A549 (cell line): ENCODE measurements at regions of chr19 and their contacts with region 1.

Region 1: GRCh38 chr19:18183529-18183928 is 9.5 kb upstream of the MPV17L2 start:
- DNase-seq: no peak
- ATAC-seq: no peak
- H3K4me3 ChIP-seq: no peak overlapping the region
- H3K27ac ChIP-seq: no peak overlapping the region
- H3K4me1 ChIP-seq: no peaks in the 10 kb centered on the region
- CTCF ChIP-seq: no peak
- EP300 ChIP-seq: no peak
- POLR2A ChIP-seq: no peak
- RAD21 ChIP-seq: no peak

Region 2: DNA sequence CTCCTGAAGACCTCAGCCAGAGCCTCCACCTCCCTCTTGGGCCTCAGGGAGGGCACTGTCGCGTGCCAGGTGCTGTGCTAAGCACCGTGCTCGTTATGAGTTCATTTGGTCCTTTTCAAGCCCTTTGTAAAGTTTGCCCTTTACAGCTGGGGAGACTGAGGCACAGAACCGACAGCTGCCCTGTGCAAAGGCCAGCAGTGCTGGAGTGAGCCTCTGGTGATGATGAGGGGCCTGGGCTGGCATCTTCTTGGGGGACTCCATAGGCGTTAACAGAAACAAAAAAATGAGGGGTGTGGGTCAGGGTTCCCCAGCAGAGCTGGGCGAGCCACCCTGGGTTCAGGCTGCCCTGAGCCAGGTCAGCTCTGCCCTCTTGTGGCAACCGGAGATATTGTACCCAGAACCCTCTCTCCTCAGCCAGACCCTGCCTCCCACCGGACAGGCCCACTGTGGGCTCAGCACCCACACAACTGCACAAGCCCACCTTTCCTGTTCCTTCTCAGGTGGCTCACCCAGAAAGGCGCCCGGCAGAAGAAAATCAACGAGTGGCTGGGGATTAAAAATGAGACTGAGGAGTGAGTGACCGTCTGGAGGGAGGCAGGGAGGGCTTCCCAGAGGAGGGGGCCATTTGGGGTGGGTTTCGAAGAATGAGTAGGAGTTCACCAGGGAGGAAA is 15.4 kb before region 1 on chr19:
- CTCF ChIA-PET with region 1: interaction called, 11 read pairs
- POLR2A ChIA-PET with region 1: no interaction called
- DNase-seq: peak in 1 of 2 experiments; percentile 81
- ATAC-seq: peak; percentile 88 to 93
- H3K4me3 ChIP-seq: no peak overlapping the region
- H3K27ac ChIP-seq: no peak overlapping the region
- H3K4me1 ChIP-seq: peaks cover under 1% of the 10 kb centered on the region; the same call in 1 of the 3 replicates
- CTCF ChIP-seq: peak; percentile 51
- EP300 ChIP-seq: no peak
- POLR2A ChIP-seq: no peak
- RAD21 ChIP-seq: peak; percentile 52 to 58

Region 3: GRCh38 chr19:18357041-18357440 is 173.5 kb after region 1 on chr19:
- CTCF ChIA-PET with region 1: no interaction called
- POLR2A ChIA-PET with region 1: no interaction called
- DNase-seq: no peak
- ATAC-seq: no peak
- H3K4me3 ChIP-seq: no peak overlapping the region
- H3K27ac ChIP-seq: 0 out of 6 replicates have a peak overlapping the region, but pooled peaks of 1 of the 2 experiments have one; percentile 3
- H3K4me1 ChIP-seq: no peaks in the 10 kb centered on the region
- CTCF ChIP-seq: no peak
- EP300 ChIP-seq: no peak
- POLR2A ChIP-seq: no peak
- RAD21 ChIP-seq: no peak